A549 (cell line): ENCODE measurements at regions of chr2 and their contacts with region 1.

Region 1: DNA sequence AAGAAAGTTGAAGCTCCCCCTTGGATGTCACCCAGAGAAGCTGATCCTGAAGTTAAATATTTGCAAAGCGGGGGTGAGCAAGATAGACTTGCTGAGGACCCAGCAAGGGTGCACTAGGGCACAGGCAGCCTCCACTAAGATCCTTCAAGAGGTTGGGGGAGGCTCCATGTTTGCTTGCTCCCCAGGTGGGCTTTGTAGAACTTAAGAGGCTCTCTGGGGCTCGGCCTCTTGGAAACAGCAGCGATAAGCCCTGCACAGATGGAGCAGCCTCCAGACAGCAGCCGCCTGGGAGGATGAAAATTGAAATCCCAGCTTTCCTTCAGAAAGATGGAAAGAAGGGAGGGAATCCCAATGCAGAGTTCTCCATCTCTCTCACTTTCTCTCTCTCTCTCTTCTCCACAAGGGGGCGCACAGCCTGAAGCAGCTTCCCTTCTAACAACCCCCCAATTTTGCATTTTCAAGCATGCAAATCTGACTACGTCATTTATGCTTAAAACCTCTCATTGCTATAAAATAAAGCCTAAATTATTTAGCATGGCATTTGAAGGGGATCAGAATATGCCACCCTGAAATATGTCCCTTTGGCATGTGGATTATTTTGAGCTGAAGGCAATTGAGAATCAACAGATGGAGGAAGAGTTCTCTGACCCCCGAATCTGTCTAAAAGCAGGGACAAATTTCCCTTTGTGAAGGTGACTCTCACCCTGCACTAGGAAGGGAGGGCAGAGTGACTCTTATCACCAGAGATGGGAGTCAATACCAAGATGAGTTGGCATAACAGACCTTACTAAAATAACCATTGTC is 185.7 kb upstream of the KLHL29 start:
- DNase-seq: peak; percentile 13 to 47
- ATAC-seq: peak; percentile 57 to 89; a peak in 3 of 6 replicates
- H3K4me3 ChIP-seq: no peak overlapping the region
- H3K27ac ChIP-seq: no peak overlapping the region
- H3K4me1 ChIP-seq: no peaks in the 10 kb centered on the region
- CTCF ChIP-seq: peak; percentile 80
- EP300 ChIP-seq: no peak
- POLR2A ChIP-seq: no peak
- RAD21 ChIP-seq: peak; percentile 50 to 64; a peak in 4 of 5 replicates

Region 2: GRCh38 chr2:23211987-23212583 is 12.8 kb after region 1 on chr2:
- CTCF ChIA-PET with region 1: interaction called, 17 read pairs
- POLR2A ChIA-PET with region 1: no interaction called
- DNase-seq: no peak
- ATAC-seq: no peak
- H3K4me3 ChIP-seq: no peak overlapping the region
- H3K27ac ChIP-seq: no peak overlapping the region
- H3K4me1 ChIP-seq: peaks cover 15% of the 10 kb centered on the region; the same call in 1 of the 3 replicates
- CTCF ChIP-seq: no peak
- EP300 ChIP-seq: no peak
- POLR2A ChIP-seq: no peak
- RAD21 ChIP-seq: no peak

Region 3: DNA sequence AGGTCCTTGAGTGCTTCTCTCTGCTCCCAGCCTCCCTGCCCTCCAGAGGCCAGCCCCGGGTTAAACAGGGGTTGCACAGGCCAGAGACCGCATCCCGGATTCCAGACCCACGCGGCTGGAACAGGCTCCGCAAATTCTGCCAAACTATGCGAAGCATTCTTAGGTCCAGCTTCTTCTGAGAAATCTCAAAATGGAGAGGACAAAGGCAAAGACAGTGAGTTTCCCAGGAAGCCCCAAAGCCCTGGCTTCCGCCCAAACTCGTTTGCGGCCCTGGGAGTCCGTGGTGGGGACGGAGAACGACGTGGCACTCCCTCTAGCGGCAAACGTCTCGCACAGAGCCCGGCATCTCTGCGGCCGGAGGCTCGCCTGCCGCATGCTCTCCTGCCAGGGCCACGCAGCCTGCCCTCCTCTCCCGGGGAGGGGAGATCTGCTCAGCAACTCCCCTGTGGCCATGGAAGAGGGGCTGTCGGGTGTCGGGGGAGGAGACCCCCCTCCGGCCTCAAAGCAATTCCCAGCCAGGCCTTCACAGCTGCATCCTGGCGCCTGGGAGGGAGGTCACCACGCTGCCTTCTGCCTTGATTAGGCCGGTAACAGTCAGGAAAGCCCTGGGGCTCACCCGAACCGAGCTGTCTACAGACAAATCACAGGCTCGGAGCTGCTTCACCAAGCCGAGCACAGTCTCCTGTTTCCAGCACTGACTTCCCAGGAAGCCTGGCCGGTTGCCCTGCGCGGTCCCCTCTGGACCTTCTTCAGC is 152.2 kb after region 1 on chr2:
- CTCF ChIA-PET with region 1: interaction called, 10 read pairs
- POLR2A ChIA-PET with region 1: no interaction called
- DNase-seq: peak; percentile 69 to 85
- ATAC-seq: peak; percentile 98 to 99
- H3K4me3 ChIP-seq: no peak overlapping the region
- H3K27ac ChIP-seq: peak overlapping the region in 1 of 2 experiments; percentile 73; a peak in 2 of 6 replicates
- H3K4me1 ChIP-seq: no peaks in the 10 kb centered on the region
- CTCF ChIP-seq: peak; percentile 84
- EP300 ChIP-seq: no peak
- POLR2A ChIP-seq: no peak
- RAD21 ChIP-seq: peak; percentile 77 to 81